Gastrocnemius medialis (tissue), 4 donors: ENCODE measurements at regions of chr17 and their contacts with region 1.

Region 1: GRCh38 chr17:72976971-72977770 is 115.3 kb downstream of the SLC39A11 start:
- DNase-seq: peak; percentile 4 to 23
- ATAC-seq: peak; percentile 36 to 60
- H3K4me3 ChIP-seq: no peak overlapping the region
- H3K27ac ChIP-seq: peak overlapping the region in 1 of 4 donors; percentile 26
- H3K4me1 ChIP-seq: peaks cover 0 to 17% of the 10 kb centered on the region in 2 donors
- H3K27me3 ChIP-seq: no peaks in the 10 kb centered on the region
- CTCF ChIP-seq: no peak
- POLR2A ChIP-seq: no peak

Region 2: GRCh38 chr17:72916991-72917390 is 60.2 kb before region 1 on chr17:
- in situ Hi-C with region 1: loop called in 1 of 4 experiments (anchors 10 kb)
- intact Hi-C with region 1: no loop called
- DNase-seq: no peak
- ATAC-seq: no peak
- H3K4me3 ChIP-seq: no peak overlapping the region
- H3K27ac ChIP-seq: no peak overlapping the region
- H3K4me1 ChIP-seq: no peaks in the 10 kb centered on the region
- H3K27me3 ChIP-seq: no peaks in the 10 kb centered on the region
- CTCF ChIP-seq: no peak
- POLR2A ChIP-seq: no peak

Region 3: GRCh38 chr17:73030501-73030921 is 53.3 kb after region 1 on chr17:
- in situ Hi-C with region 1: loop called in 1 of 4 experiments (anchors 10 kb)
- intact Hi-C with region 1: no loop called
- DNase-seq: peak; percentile 16 to 22
- ATAC-seq: peak; percentile 49 to 70
- H3K4me3 ChIP-seq: no peak overlapping the region
- H3K27ac ChIP-seq: no peak overlapping the region
- H3K4me1 ChIP-seq: peaks cover 12 to 16% of the 10 kb centered on the region in 2 donors
- H3K27me3 ChIP-seq: no peaks in the 10 kb centered on the region
- CTCF ChIP-seq: no peak
- POLR2A ChIP-seq: no peak